Activated B cell treated with CpG ODN at 0.5 μM for 24 hours (primary cell): ENCODE measurements at regions of chr3 and their contacts with region 1.

Region 1: GRCh38 chr3:184145111-184145524 is 10.0 kb downstream of the EIF2B5 start:
- DNase-seq: no peak
- ATAC-seq: peak; percentile 69
- H3K4me3 Mint-ChIP-seq: no peak overlapping the region
- H3K27ac Mint-ChIP-seq: no peak overlapping the region
- H3K4me1 Mint-ChIP-seq: peaks cover 12% of the 10 kb centered on the region
- H3K27me3 Mint-ChIP-seq: no peaks in the 10 kb centered on the region
- CTCF ChIP-seq: no peak

Region 2: GRCh38 chr3:184289426-184289938 is 144.4 kb after region 1 on chr3:
- CTCF ChIA-PET with region 1: interaction called, 3 read pairs
- POLR2A ChIA-PET with region 1: no interaction called
- intact Hi-C with region 1: loop called (anchors 1 kb)
- DNase-seq: peak; percentile 30
- ATAC-seq: peak; percentile 65
- H3K4me3 Mint-ChIP-seq: no peak overlapping the region
- H3K27ac Mint-ChIP-seq: no peak overlapping the region
- H3K4me1 Mint-ChIP-seq: peaks cover 3% of the 10 kb centered on the region
- H3K27me3 Mint-ChIP-seq: peaks cover 15% of the 10 kb centered on the region
- CTCF ChIP-seq: no peak